ENCODE measurements at regions of chr1 and their contacts with region 1.

Region 1: DNA sequence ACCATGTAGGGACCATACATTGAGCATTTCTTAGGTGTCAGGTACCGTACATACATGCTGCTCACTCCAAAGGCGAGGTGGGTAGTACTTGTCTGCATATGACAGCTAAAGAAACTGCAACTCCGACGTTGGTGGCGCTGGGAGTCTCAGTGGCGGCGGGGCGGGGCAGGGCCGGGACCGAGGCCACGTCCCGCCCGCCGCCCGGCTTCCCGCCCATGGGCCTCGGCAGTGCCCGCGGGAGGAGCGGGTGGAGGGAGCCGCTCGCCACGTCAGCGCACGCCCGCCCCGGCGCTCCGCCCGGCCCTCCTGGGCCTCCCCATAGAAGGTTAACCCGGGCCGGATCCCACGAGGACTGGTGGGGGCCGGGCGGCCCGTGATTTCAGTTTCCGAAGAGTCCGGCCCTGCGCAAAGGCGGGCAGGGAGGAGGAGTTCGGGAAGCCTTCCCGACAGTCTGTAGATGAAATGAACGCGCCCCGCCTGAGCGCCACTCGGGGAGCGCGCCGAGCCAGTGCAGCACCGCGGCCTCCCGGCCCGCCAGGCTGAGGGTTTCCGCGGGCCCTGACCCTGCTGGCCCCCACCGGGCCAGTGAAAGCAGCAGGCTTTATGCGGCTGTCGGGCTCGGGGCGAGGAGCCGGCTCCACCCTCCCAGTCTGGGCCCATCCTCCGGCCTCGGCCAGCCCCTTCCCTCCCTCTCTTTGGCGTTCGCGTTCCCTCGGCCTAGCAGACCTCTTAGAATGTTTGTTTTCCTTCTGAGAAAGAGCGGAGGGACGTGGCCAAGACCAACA is 119.9 kb upstream of the JUN start:
- DNase-seq: peak; percentile 81 to 94
- H3K4me3 ChIP-seq: peak overlapping the region; percentile 63
- H3K27ac ChIP-seq: peak overlapping the region; percentile 90
- H3K4me1 ChIP-seq: peaks cover 69% of the 10 kb centered on the region
- H3K27me3 ChIP-seq: no peaks in the 10 kb centered on the region
- CTCF ChIP-seq: no peak

Region 2: DNA sequence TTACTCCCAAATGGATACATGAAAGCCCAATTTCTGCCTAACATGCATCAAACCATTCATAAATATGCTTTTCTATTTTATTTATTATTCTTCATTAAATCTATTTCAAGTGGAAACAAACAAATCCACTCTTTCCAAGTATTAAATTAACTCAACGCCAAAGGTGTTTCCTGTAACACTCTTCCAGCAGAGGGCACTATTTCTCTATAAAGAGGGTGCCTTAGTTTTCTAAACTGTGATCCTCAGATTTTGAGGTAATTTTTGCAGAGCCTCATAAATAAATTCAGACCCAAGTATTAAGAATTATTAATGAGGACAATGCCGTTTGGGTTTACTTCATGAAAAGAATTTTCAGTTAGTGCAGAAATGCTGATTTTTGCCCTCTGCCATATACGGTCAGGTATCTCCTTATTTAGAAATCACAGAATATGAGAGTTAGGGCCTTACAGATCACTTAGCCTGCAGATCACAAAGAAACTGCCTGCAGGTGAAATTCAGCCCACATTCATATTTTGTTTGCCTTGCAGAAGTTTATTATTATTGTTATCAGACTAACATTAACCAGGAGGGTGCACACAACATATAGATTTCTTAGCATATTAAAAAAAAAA is 163.7 kb before region 1 on chr1:
- CTCF ChIA-PET with region 1: no interaction called
- POLR2A ChIA-PET with region 1: no interaction called
- intact Hi-C with region 1: loop called (anchors 2 kb)
- DNase-seq: peak in 1 of 2 experiments; percentile 56
- H3K4me3 ChIP-seq: no peak overlapping the region
- H3K27ac ChIP-seq: no peak overlapping the region
- H3K4me1 ChIP-seq: peaks cover 12% of the 10 kb centered on the region
- H3K27me3 ChIP-seq: no peaks in the 10 kb centered on the region
- CTCF ChIP-seq: peak; percentile 95

Region 3: DNA sequence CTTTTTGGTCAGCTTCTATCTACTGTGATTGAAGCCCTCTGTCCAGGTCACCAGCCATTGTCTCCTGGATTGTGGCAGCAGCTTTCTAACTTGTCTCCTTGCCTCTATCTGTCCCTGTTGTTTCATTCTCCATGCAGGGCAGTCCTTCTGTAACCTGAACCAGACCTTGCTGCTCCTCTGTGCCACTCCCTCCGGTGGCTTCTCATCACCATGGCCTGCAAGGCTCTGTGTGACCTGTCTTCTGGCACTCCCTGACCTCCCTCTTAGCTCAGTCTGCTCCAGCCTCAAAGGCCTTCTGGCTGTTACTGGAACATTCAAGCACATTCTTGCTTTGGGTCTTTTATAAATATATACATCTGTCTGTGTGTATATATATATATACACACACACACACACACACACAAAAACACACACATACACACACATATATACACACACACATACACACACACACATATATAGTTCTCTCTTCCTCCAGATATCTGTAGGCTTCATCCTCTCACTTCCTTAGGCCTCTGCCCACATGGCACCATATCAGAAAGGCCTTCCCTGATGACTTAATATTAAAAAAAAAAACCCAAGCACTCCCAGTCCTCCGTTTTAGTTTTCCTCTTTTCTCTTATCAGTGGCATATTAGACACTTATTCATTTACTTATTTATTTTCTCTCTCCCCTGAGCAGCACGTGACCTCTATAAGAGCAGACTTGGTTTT is 98.7 kb before region 1 on chr1:
- CTCF ChIA-PET with region 1: no interaction called
- POLR2A ChIA-PET with region 1: interaction called, 10 read pairs
- intact Hi-C with region 1: no loop called
- DNase-seq: peak; percentile 62 to 65
- H3K4me3 ChIP-seq: no peak overlapping the region
- H3K27ac ChIP-seq: peak overlapping the region; percentile 45
- H3K4me1 ChIP-seq: peaks cover 29% of the 10 kb centered on the region
- H3K27me3 ChIP-seq: no peaks in the 10 kb centered on the region
- CTCF ChIP-seq: 0 out of 2 replicates have a peak, but pooled peaks have one; percentile 16

Region 4: GRCh38 chr1:58848818-58849411 is 54.8 kb before region 1 on chr1:
- CTCF ChIA-PET with region 1: no interaction called
- POLR2A ChIA-PET with region 1: interaction called, 4 read pairs
- intact Hi-C with region 1: loop called (anchors 1 kb)
- DNase-seq: peak; percentile 95 to 98
- H3K4me3 ChIP-seq: peak overlapping the region; percentile 27
- H3K27ac ChIP-seq: peak overlapping the region; percentile 92
- H3K4me1 ChIP-seq: peaks cover 59% of the 10 kb centered on the region
- H3K27me3 ChIP-seq: no peaks in the 10 kb centered on the region
- CTCF ChIP-seq: no peak; the same call in 1 of the 2 replicates

Region 5: GRCh38 chr1:59020151-59020997 is 116.7 kb after region 1 on chr1:
- CTCF ChIA-PET with region 1: no interaction called
- POLR2A ChIA-PET with region 1: no interaction called
- intact Hi-C with region 1: loop called (anchors 10 kb)
- DNase-seq: peak; percentile 20 to 49
- H3K4me3 ChIP-seq: no peak overlapping the region
- H3K27ac ChIP-seq: no peak overlapping the region
- H3K4me1 ChIP-seq: peaks cover 22% of the 10 kb centered on the region
- H3K27me3 ChIP-seq: no peaks in the 10 kb centered on the region
- CTCF ChIP-seq: no peak

Measured in PC-9 (cell line).